Activated CD4-positive, alpha-beta memory T cell treated with anti-CD3 and anti-CD28 coated beads, Interleukin-2, amount 10 ng/mL, durations not matched to agents 7 days and 5 days (primary cell): ENCODE measurements at regions of chr1 and their contacts with region 1.

Region 1: DNA sequence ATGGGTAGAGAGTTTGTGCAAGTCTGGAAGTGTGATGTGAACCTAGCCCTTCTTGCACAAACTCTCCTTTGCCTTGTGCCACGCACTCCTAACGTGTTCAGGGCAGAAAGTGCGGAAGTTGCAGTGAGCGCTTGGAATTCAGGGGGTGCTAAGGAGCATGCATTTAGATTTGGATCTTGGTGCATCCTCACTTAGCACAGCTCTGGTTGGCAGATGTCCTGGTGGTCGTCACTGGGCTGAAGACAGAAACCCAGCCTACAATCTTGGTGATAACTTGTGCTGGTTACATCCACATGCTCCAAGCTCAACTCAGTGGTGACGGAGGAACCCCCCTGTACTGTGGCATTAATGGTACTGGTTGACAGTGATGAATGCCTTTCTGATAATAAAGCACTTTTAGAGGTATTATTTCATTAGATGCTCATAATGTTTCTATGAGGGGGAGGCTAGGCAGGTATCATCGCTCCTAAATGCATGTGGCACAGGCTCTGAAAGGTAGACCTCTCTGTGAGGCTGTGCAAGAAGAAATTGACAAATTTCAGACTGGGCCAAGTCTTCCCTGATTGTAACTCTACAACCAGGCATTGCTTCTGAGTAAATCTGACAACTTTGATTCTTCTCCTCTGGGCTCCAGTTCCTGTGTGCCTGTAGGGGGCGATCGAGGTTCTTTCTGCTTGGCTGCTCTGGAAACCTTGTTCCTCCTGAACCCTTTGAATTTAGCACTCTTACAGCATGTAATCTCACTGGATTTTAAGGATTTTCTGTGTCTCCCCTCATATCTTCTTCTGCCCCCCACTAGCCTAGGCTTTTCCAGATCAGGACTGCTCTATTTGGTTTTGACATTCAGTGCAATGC is 40.6 kb downstream of the MAPKAPK2 start:
- DNase-seq: peak; percentile 70
- H3K4me3 Mint-ChIP-seq: no peak overlapping the region
- H3K27ac Mint-ChIP-seq: no peak overlapping the region
- H3K4me1 Mint-ChIP-seq: peaks cover 54% of the 10 kb centered on the region
- H3K27me3 Mint-ChIP-seq: no peaks in the 10 kb centered on the region

Region 2: GRCh38 chr1:206461602-206462455 is 263.5 kb before region 1 on chr1:
- CTCF ChIA-PET with region 1: no interaction called
- POLR2A ChIA-PET with region 1: no interaction called
- DNase-seq: peak; percentile 79
- H3K4me3 Mint-ChIP-seq: no peak overlapping the region
- H3K27ac Mint-ChIP-seq: no peak overlapping the region
- H3K4me1 Mint-ChIP-seq: peaks cover 49% of the 10 kb centered on the region
- H3K27me3 Mint-ChIP-seq: no peaks in the 10 kb centered on the region

Region 3: GRCh38 chr1:206563367-206564207 is 161.7 kb before region 1 on chr1:
- CTCF ChIA-PET with region 1: no interaction called
- POLR2A ChIA-PET with region 1: no interaction called
- DNase-seq: no peak
- H3K4me3 Mint-ChIP-seq: peak overlapping the region; percentile 72
- H3K27ac Mint-ChIP-seq: peak overlapping the region; percentile 88
- H3K4me1 Mint-ChIP-seq: peaks cover 89% of the 10 kb centered on the region
- H3K27me3 Mint-ChIP-seq: no peaks in the 10 kb centered on the region

Region 4: DNA sequence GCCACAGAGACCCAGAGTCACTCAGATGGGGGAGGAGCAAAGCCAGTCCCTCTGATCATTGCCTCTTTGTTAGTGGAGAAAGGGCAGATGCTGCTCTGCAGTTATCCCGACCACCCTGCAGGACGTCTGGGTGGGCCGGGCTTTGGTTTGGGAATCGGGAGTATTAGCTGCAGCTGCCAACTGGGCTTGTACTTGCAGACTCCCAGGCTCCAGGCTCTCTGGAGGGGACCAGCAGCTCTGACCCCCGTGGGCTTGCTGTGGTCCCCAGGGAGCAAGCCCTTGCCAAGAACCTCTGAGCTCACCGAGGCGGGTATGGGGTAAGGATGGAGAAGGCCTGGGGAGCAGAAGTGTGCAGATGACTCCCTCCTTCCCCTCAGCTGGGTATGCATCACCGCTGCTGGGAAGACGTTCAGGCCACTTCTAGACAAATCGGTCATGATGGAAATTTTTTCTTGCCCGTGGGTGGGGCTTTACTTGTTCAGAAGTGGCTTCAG is 19.0 kb before region 1 on chr1:
- CTCF ChIA-PET with region 1: interaction called, 10 read pairs
- POLR2A ChIA-PET with region 1: interaction called, 3 read pairs
- DNase-seq: no peak
- H3K4me3 Mint-ChIP-seq: no peak overlapping the region
- H3K27ac Mint-ChIP-seq: no peak overlapping the region
- H3K4me1 Mint-ChIP-seq: peaks cover 79% of the 10 kb centered on the region
- H3K27me3 Mint-ChIP-seq: no peaks in the 10 kb centered on the region

Region 5: DNA sequence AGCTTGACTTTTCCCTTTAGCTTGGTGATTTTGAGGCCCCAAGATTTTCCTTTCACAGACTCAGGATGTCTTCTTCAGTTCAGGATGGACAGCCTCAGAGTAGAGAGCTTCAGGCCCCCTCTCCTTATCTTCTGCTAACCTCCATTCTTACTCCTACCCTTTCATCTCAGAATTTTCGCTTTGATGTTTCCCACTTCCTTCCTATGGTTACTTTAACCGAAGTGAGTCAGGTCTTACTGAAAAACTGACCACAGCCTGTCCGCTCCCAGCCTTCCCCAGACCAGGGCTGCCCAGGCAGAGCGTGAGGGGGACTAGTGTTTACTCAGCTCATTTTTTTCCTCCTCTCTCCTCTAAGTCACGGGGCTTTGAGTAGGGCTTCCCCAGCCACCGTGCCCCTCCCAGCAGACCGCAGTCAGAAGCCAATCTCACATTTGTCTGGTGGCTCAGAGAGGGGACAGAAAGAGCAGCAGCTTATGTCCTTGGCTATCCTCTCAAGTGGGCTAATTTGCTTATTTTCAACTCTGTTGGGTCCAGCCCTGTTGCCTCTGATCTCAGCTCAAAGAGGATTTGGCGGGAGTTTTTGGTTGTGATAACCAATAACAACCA is 41.0 kb after region 1 on chr1:
- CTCF ChIA-PET with region 1: interaction called, 10 read pairs
- POLR2A ChIA-PET with region 1: no interaction called
- DNase-seq: peak; percentile 85
- H3K4me3 Mint-ChIP-seq: peak overlapping the region; percentile 21
- H3K27ac Mint-ChIP-seq: peak overlapping the region; percentile 66
- H3K4me1 Mint-ChIP-seq: peaks cover 75% of the 10 kb centered on the region
- H3K27me3 Mint-ChIP-seq: peaks cover 19% of the 10 kb centered on the region

Region 6: DNA sequence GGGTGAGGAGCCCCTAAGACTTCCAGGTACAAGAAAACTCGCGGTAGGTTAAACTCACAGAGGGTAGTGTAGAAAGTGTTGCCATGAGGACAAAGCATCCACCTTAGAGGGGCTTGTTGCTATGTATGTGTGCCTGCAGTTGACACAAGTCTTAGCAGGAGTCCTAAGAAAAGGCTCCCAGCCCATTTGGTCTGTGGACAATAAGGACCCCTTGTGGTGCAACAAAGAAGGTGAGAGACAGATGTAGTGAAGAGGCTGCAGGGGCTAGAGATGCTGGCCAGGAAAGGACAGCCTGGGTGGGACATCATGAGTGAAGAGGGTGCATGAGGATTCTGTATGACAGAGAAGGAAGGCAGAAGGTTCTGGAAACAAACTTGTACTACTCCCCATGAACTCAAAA is 83.3 kb after region 1 on chr1:
- CTCF ChIA-PET with region 1: interaction called, 276 read pairs
- POLR2A ChIA-PET with region 1: interaction called, 3 read pairs
- DNase-seq: peak; percentile 62
- H3K4me3 Mint-ChIP-seq: no peak overlapping the region
- H3K27ac Mint-ChIP-seq: no peak overlapping the region
- H3K4me1 Mint-ChIP-seq: peaks cover 53% of the 10 kb centered on the region
- H3K27me3 Mint-ChIP-seq: no peaks in the 10 kb centered on the region

Region 7: DNA sequence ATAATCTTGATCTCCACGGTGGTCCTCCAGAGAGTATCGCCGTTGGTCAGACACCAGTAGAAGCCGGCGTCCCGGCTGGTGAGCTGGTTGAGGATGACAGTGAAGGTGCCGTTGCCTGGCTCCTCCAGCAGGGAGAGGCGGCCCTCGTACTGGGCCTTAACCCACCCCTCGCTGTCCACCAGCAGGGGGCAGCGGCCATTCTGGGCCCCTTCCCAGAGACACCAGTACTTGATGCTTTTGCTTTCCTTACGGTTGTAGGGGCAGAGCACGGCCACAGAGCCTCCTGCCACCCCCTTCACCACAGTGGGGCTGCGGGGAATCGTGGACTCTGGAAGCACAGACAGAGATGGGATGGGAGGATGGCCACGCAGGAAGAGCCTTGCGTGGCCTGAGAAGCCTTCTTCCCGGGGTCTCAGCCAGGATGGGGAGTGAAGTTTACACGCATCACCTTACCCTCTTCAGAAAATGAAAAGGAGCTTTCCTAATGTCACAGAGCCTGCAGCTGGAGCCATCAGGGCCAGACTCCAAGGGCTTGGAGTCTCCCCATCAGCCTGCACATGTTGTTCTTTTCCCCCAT is 210.2 kb after region 1 on chr1:
- CTCF ChIA-PET with region 1: interaction called, 14 read pairs
- POLR2A ChIA-PET with region 1: no interaction called
- DNase-seq: peak; percentile 54
- H3K4me3 Mint-ChIP-seq: no peak overlapping the region
- H3K27ac Mint-ChIP-seq: no peak overlapping the region
- H3K4me1 Mint-ChIP-seq: peaks cover 8% of the 10 kb centered on the region
- H3K27me3 Mint-ChIP-seq: no peaks in the 10 kb centered on the region